ENCODE measurements at regions of chr4 and their contacts with region 1.

Region 1: DNA sequence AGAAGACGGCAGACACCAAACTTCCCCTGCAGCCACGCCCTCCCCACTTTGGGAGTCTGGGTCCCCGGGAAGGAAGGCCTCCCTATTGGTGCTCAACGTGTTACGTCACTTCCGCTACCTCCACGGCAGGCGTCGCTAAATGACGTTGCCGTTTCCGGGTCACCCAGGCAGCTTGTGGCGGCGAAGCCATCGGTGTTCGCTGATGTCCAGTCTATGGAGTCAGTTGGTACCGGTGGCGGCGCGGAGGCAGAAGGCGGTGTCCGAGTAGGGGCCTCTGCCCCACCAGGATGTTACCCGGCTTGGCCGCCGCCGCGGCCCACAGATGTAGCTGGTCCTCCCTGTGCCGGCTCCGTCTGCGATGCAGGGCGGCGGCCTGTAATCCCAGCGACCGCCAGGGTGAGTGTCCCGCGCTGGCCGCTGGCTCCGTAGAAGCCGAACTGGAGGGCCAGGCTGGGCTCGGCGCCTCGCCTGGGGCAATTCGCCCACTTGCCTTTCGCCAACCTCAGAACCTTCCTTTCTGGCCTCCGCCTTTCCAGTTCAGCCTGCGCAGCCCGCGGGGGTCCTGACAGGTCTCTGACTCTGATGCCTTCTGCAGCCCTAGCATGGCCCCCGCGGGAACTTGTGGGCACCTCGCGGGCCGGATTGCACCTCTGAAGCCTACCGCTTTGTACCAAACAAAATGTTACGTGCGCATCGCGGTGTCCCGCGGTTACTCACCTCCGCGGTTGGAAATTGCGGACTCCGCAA is at the start of gene SLC30A9:
- DNase-seq: peak; percentile 84 to 98 (median 92)
- ATAC-seq: peak; percentile 94
- H3K4me3 ChIP-seq: peak within 1 kb of the TSS; percentile 77 to 78
- H3K4me3 Mint-ChIP-seq: peak within 1 kb of the TSS; percentile 95
- H3K27ac ChIP-seq: peak within 1 kb of the TSS; percentile 83 to 91
- H3K27ac Mint-ChIP-seq: peak within 1 kb of the TSS; percentile 98
- H3K4me1 ChIP-seq: peaks cover 20% of the 10 kb centered on the region
- H3K4me1 Mint-ChIP-seq: peaks cover 39% of the 10 kb centered on the region
- H3K27me3 ChIP-seq: no peaks in the 10 kb centered on the region
- H3K27me3 Mint-ChIP-seq: no peaks in the 10 kb centered on the region
- CTCF ChIP-seq: no peak
- total RNA-seq, gene SLC30A9: 16.3 to 18.7 TPM

Region 2: GRCh38 chr4:41934815-41935651 is 55.5 kb before region 1 on chr4 and contains the start of gene TMEM33:
- CTCF ChIA-PET with region 1: interaction called, 3 read pairs
- POLR2A ChIA-PET with region 1: no interaction called
- intact Hi-C with region 1: loop called (anchors 1 kb)
- DNase-seq: peak; percentile 50 to 92 (median 77)
- ATAC-seq: peak; percentile 84
- H3K4me3 ChIP-seq: peak within 1 kb of the TSS; percentile 85 to 87
- H3K4me3 Mint-ChIP-seq: peak within 1 kb of the TSS; percentile 95
- H3K27ac ChIP-seq: peak within 1 kb of the TSS; percentile 69 to 70
- H3K27ac Mint-ChIP-seq: peak within 1 kb of the TSS; percentile 92
- H3K4me1 ChIP-seq: peaks cover 34% of the 10 kb centered on the region
- H3K4me1 Mint-ChIP-seq: peaks cover 49% of the 10 kb centered on the region
- H3K27me3 ChIP-seq: no peaks in the 10 kb centered on the region
- H3K27me3 Mint-ChIP-seq: no peaks in the 10 kb centered on the region
- CTCF ChIP-seq: no peak
- total RNA-seq, gene TMEM33: 23.2 to 24.6 TPM

Region 3: DNA sequence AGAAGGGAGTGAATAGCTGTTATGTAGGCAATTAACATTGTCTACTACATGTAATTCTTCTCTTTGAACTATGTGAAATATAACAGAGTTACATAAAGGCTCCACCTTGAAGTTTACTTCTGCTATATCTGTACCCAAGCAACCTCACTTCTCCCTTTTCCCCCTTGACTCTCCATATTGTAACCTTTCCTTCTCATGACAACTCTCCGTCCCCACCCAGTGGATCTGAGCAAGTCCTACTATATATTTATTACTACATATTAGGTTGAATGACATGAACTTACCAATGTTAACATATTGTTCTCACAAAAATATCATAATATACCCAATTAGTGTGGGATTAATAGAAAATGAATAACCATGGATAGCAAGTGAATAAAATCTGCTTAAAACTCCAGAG is 759.6 kb after region 1 on chr4:
- CTCF ChIA-PET with region 1: no interaction called
- POLR2A ChIA-PET with region 1: no interaction called
- intact Hi-C with region 1: no loop called
- DNase-seq: peak in 8 of 9 experiments; percentile 2 to 80 (median 48)
- ATAC-seq: peak; percentile 96
- H3K4me3 ChIP-seq: no peak overlapping the region
- H3K4me3 Mint-ChIP-seq: no peak overlapping the region
- H3K27ac ChIP-seq: no peak overlapping the region
- H3K27ac Mint-ChIP-seq: no peak overlapping the region
- H3K4me1 ChIP-seq: no peaks in the 10 kb centered on the region
- H3K4me1 Mint-ChIP-seq: peaks cover 2% of the 10 kb centered on the region
- H3K27me3 ChIP-seq: no peaks in the 10 kb centered on the region
- H3K27me3 Mint-ChIP-seq: no peaks in the 10 kb centered on the region
- CTCF ChIP-seq: peak; percentile 59